ENCODE measurements at regions of chr9 and their contacts with region 1.

Region 1: DNA sequence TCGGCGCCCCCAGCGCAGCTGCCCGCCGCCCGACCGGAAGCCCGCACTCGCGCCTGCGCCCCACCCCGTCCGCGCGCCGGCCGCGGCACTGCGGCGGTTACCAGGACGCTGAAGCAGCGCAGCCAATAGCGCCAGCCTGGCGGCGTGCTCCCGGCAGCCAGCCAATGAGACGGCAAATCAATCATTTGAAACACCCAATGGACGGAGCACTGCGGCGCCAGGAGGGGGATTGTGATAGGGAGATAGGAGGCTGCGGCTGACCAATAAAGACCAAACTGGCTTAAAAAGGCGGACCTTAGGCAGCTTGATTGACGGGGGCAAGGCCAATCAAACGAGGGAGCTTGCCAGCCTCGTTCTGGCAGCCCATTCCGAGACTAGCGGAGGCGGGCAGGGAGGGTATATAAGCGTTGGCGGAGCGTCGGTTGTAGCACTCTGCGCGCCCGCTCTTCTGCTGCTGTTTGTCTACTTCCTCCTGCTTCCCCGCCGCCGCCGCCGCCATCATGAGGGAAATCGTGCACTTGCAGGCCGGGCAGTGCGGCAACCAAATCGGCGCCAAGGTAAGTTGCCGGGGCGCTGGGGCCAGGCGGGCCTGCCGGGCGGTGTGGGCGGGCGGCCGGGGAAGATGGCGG is at the start of gene TUBB4B:
- DNase-seq: peak in 9 of 10 donors; percentile 89 to 100 (median 98)
- ATAC-seq: peak; percentile 82
- H3K4me3 Mint-ChIP-seq: peak within 1 kb of the TSS; percentile 84 to 97 (median 92)
- H3K27ac Mint-ChIP-seq: peak within 1 kb of the TSS; percentile 88 to 97 (median 92)
- H3K4me1 Mint-ChIP-seq: peaks cover 7 to 40% (median 30%) of the 10 kb centered on the region in 4 donors
- H3K27me3 Mint-ChIP-seq: peaks cover 0 to 3% (median 0%) of the 10 kb centered on the region in 5 donors
- polyA plus RNA-seq, gene TUBB4B: 10.8 to 23.4 (median 22.5) TPM

Region 2: DNA sequence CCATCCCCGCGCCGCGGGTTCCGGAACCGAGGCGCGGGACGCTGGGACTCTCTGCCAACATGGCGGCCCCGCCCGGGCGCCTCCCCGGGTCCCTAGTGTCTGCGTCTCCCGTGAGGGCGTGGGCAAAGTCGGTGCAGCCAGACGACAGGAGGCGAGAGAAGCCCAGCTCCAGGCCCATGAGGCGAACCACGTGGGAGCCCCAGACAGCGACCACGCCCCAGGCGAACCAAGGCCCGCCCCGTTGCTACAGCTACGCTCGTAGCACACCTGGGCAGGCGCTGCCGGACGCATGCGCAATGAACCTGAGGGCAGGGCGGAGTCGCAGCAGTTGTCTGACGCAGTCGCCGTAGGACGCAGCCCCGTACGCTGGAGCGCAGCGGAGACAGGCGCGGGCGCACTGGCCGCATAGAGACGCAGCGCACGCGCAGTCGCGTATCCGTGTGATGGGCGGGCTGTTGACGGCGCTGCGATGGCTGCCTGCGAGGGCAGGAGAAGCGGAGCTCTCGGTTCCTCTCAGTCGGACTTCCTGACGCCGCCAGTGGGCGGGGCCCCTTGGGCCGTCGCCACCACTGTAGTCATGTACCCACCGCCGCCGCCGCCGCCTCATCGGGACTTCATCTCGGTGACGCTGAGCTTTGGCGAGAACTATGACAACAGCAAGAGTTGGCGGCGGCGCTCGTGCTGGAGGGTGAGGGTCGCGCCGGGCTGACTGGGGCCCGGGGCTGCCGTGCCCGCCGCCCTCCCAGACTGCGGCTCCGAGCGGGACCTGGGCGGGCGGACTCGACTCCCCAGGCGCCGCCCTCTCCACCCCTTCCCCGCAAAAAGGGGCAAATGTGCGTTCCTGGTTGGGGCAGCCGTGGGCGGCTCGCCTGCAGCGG is 154.2 kb before region 1 on chr9 and contains the start of gene MAN1B1:
- POLR2A ChIA-PET with region 1: interaction called, 35 read pairs
- DNase-seq: peak; percentile 93 to 100 (median 99)
- ATAC-seq: peak; percentile 86 to 88
- H3K4me3 Mint-ChIP-seq: peak within 1 kb of the TSS; percentile 80 to 97 (median 92)
- H3K27ac Mint-ChIP-seq: peak within 1 kb of the TSS; percentile 89 to 98 (median 96)
- H3K4me1 Mint-ChIP-seq: peaks cover 21 to 41% (median 37%) of the 10 kb centered on the region in 4 donors
- H3K27me3 Mint-ChIP-seq: no peaks in the 10 kb centered on the region
- polyA plus RNA-seq, gene MAN1B1: 30.6 to 46.6 (median 38.3) TPM

Region 3: DNA sequence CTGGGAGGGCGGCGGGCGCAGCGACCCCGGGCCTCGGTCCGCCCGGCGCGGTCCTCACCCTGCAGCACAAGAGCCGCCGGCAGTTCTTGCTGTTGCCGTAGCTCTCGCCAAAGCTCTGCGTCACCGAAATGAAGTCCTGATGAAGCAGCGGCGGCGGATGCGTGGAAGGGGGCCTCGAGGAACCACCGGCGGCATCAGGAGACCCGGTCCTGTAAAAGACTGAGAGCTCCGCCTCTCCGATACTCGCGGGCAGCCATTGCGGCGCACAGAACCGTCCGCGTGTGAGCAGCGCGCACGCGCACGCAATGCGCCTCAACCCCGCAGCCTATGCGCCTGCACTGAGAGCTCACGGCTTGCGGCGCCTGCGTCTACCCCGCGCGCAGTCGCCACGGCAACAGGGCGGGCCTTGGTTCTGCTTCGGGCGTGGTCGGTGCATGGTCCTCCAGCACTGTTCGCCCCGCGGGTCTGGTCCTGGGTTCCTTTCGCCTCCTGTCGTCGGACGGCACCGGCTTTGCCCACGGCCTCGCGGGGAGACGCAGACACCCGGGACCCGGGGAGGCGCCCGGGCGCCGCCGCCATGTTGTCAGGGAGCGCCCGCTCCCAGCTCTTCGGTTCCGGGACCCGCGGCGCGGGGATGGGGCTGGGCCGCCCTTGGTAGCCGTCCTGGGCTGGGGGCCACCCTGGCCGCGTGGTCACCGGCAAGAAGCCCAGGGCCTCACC is 111.4 kb before region 1 on chr9:
- POLR2A ChIA-PET with region 1: interaction called, 25 read pairs
- DNase-seq: peak; percentile 82 to 93 (median 88)
- ATAC-seq: peak; percentile 92 to 95
- H3K4me3 Mint-ChIP-seq: peak overlapping the region; percentile 78 to 95 (median 88)
- H3K27ac Mint-ChIP-seq: peak overlapping the region; percentile 71 to 94 (median 84)
- H3K4me1 Mint-ChIP-seq: peaks cover 17 to 30% (median 28%) of the 10 kb centered on the region in 4 donors
- H3K27me3 Mint-ChIP-seq: peaks cover 0 to 10% (median 2%) of the 10 kb centered on the region in 5 donors

Region 4: DNA sequence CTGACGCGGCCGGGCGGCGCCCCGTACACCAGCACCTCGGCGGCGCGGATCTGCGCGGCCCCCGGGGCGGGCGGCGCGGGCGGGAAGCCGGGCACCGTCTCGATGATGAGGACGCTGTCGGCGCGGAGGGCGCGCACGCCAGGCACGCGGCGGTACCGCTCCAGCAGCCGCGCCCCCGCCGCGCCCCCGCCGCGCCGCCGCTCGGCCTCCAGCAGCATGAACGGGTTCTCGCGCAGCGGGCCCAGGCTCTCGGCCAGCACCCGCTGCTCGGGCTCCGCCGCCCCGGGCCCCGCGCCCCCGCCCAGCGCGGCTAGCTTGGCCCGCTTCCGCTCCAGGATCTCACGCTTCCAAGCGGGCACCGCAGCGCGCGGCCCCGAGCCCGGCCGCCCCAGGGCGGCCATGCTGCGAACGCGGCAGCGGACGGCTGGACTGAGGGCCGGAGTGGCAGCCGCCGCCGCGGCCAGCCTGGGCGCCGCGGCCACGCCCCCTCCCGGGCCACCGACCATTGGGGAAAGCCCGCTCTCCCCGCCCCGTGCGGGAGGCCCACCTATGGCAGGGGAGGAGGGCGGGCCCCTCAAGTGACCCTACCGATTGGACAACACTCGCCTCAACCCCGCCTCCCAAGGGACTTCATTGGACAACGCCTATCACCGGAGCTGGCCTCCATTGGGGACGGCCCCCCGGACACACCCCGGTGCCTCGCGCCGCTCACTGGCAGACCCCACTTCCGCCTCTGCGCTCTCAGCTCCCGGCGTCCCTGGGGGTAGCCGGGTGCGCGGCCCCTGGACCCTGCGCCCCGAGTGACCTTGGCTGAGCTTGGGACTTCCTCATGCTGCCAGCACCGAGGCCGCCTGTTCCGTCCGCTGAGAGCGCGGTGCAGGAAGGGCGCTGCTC is 40.4 kb before region 1 on chr9 and contains the start of gene TPRN:
- POLR2A ChIA-PET with region 1: interaction called, 12 read pairs
- DNase-seq: peak; percentile 94 to 99 (median 98)
- ATAC-seq: peak; percentile 93 to 95
- H3K4me3 Mint-ChIP-seq: peak within 1 kb of the TSS; percentile 76 to 92 (median 85)
- H3K27ac Mint-ChIP-seq: peak within 1 kb of the TSS; percentile 48 to 90 (median 80)
- H3K4me1 Mint-ChIP-seq: peaks cover 9 to 39% (median 22%) of the 10 kb centered on the region in 4 donors
- H3K27me3 Mint-ChIP-seq: no peaks in the 10 kb centered on the region
- polyA plus RNA-seq, gene TPRN: 0.15 to 0.42 (median 0.39) TPM

Region 5: DNA sequence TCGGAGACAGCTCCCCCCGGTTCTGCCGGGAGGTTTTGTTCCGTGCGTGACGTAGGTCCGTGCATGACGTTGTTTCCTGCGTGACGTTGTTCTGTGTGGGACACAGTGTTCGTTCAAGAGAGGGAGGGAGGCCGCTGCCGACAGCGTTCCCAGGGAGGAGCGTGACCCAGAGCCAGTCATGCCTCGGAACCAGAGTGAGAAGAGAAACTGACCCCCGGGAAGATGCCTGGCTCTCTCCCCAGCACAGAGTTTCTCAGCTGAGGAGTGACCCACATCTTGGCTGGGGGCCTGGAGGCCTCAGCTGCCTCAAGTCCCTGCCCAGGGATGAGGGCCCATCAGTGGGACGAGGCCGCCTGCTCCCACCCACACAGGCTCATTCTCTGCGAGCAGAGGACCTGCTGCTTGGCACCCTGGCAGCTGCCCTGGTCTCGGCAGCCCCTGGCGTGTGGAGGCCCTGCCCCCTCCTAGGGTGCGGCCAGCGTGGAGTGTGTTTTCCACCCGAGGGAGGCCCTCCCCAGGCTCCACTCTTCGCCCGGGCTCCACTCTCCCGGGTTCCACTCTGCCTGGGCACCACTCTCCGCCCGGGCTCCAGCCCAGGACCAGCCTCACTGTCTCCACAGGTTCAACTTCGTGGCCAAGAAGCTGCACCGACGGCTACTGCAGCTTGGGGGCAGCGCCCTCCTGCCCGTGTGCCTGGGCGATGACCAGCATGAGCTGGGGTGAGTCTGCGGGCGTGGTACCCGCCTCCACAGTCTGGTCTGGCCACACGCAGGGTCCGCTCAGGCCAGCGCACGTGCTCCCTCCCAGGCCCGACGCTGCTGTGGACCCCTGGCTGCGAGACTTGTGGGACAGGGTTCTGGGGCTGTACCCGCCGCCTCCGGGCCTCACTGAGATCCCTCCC is 27.6 kb before region 1 on chr9:
- POLR2A ChIA-PET with region 1: no interaction called
- DNase-seq: no peak
- ATAC-seq: no peak
- H3K4me3 Mint-ChIP-seq: no peak overlapping the region
- H3K27ac Mint-ChIP-seq: peak overlapping the region in 1 of 10 donors; percentile 40
- H3K4me1 Mint-ChIP-seq: peaks cover 0 to 6% (median 3%) of the 10 kb centered on the region in 4 donors
- H3K27me3 Mint-ChIP-seq: no peaks in the 10 kb centered on the region

Region 6: DNA sequence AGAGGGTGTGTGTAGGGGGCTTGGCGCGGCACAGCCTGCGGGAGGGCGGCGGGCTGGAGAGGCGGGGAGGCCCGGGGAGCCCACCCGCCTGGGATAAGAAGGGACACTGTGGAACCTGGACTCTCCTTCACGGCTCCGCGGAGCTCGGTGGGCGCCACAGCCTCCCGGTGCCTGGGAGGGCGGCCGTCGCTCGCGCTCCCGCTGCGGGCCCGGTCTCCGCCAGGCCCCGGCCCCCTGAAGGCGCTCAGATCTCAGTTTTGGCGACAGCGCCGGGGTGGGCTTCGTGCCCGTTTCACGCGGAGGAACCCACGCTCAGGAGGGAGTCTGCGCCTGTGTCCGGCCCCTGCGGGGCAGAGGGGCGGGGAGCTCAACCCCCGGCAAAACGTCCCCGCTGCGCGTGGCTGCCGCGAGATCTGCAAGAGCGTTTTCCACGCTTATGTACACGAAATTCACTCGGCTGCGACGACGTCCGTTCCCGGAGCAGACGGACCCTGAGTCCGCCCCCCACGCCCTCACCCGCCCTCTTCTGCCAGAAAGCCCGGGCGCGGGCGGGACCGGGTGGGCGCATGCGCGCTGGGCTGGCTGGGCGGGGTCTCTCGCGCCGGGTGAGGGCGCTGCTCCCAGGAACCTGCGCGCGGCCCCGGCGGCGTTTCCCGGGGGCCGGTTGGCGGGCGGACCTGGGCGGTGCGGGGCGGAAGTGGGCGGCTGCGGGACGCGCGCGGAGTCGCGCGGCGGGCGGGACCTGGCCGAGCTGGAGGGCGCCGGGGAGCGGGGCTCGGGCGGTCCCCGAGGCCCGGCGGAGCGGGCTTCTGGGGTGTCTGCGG is 13.9 kb after region 1 on chr9 and contains the start of gene NELFB:
- POLR2A ChIA-PET with region 1: interaction called, 139 read pairs
- DNase-seq: peak; percentile 89 to 99 (median 96)
- ATAC-seq: peak; percentile 90
- H3K4me3 Mint-ChIP-seq: peak within 1 kb of the TSS; percentile 84 to 96 (median 87)
- H3K27ac Mint-ChIP-seq: peak within 1 kb of the TSS; percentile 41 to 89 (median 78)
- H3K4me1 Mint-ChIP-seq: peaks cover 4 to 20% (median 12%) of the 10 kb centered on the region in 4 donors
- H3K27me3 Mint-ChIP-seq: no peaks in the 10 kb centered on the region
- polyA plus RNA-seq, gene NELFB: 20.4 to 29.7 (median 25.0) TPM

Region 7: DNA sequence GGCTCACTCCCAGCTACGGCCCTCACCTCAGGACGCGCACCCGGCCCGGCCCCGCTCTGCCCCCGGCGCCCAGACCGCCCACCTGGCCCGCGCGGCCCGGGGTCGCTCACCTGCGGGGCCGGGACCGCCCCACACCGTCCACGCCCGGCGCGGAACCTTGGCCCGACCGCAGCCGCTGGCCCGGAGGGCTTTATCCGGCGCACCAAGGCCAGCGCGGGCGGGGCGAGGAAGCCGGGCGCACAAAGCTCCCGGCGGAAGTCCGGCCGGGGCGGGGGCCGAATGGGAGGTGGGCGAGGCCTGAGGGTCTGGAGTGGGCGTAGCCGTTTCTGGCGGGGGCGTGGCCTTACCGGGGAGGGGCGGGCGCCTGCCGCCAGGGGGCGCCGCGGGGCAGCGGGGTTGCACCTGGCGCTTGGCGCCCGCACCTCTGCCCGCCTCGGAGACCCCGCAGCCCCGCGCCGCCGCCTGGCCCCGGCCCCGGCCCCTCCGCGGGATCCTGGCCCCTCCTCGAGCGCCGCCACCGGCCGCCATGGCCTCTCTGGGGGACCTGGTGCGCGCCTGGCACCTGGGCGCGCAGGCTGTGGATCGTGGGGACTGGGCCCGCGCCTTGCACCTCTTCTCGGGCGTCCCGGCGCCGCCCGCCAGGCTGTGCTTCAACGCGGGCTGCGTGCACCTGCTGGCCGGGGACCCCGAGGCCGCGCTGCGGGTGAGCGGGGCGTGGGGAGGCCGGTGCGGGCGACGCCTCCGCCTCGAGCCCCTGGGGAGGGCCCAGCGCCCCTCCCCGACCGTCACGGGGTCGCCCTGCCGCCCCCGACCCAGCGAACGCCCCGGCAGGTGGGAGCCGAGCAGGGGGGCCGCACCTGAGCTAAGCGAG is 182.3 kb after region 1 on chr9 and contains the starts of genes EXD3 and NOXA1:
- POLR2A ChIA-PET with region 1: interaction called, 12 read pairs
- DNase-seq: peak; percentile 85 to 98 (median 93)
- ATAC-seq: peak; percentile 83 to 89
- H3K4me3 Mint-ChIP-seq: peak within 1 kb of the TSS; percentile 70 to 91 (median 82)
- H3K27ac Mint-ChIP-seq: peak within 1 kb of the TSS; percentile 48 to 87 (median 76)
- H3K4me1 Mint-ChIP-seq: peaks cover 0 to 20% (median 11%) of the 10 kb centered on the region in 4 donors
- H3K27me3 Mint-ChIP-seq: no peaks in the 10 kb centered on the region
- polyA plus RNA-seq, gene EXD3: 2.6 to 4.3 (median 3.9) TPM
- polyA plus RNA-seq, gene NOXA1: 0.75 to 1.1 (median 1.1) TPM